ENCODE measurements at regions of chr15 and their contacts with region 1.

Region 1: DNA sequence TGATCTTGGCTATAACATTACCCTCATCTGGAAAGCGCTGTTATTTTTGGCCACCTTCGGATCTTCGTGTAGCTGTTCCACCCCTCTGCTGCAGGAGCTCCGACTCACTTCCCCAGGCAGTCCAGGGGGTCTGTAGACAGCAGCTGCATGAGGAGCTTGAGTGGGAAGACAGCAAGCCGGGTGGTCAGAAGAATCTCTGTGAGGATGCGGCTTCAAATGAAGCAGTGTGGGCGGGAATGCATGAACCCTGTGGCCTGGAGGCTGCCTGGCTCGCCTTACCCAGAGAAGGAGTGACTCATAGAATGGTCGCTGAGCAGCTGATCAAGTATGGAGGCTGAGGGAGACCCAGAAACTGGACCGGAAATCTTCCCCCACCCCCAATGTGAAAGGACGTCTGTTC is 45.2 kb upstream of the NR2F2 start:
- DNase-seq: peak; percentile 95
- H3K4me3 ChIP-seq: peak overlapping the region; percentile 9
- CTCF ChIP-seq: no peak

Region 2: DNA sequence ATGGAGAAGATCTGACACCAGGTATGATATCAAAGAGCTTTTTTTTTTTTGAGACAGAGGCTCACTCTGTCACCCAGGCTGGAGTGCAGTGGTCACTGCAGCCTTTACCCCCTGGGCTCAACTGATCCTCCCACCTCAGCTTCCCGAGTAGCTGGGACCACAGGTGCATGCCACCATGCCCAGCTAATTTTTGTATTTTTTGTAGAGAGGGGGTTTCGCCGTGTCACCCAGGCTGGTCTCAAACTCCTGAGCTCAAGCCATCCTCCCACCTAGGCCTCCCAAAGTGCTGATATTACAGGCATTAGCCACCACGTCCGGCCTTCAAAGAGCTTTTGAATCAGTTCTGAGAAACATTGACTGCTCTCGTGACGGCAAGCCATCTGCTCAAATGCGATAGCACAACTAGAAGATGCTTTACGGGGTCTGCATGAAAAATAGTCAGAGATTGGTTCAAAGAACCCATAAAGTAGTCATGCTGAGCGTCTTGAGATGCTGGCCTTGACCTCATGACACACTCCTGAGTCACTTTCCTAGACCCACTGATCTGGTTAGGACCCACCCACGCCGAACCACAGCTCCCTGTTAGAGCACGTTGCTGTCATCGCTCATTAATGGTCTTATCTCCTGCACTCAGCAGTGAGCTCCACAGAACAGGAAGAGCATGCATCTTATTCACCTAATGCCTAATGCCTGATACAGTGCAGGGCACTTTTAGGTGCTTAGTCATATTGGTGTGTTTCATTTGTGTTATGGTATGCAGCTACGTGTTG is 11.8 kb before region 1 on chr15:
- CTCF ChIA-PET with region 1: interaction called, 3 read pairs
- POLR2A ChIA-PET with region 1: interaction called, 51 read pairs
- DNase-seq: peak; percentile 92
- H3K4me3 ChIP-seq: no peak overlapping the region
- CTCF ChIP-seq: no peak

Measured in AG04449 (cell line).